Transverse colon (tissue), 4 donors: ENCODE measurements at regions of chr2 and their contacts with region 1.

Region 1: GRCh38 chr2:175366815-175367214 is 185.3 kb upstream of the ATP5MC3 start:
- DNase-seq: peak; percentile 10
- H3K4me3 ChIP-seq: no peak overlapping the region
- H3K27ac ChIP-seq: no peak overlapping the region
- H3K4me1 ChIP-seq: peaks cover 0 to 6% (median 0%) of the 10 kb centered on the region in 4 donors
- H3K27me3 ChIP-seq: peaks cover 40% of the 10 kb centered on the region
- CTCF ChIP-seq: peak; percentile 43 to 67 (median 61)
- EP300 ChIP-seq: no peak
- POLR2A ChIP-seq: no peak

Region 2: GRCh38 chr2:175432021-175432420 is 65.2 kb after region 1 on chr2:
- in situ Hi-C with region 1: no loop called
- intact Hi-C with region 1: no loop called
- DNase-seq: no peak
- H3K4me3 ChIP-seq: no peak overlapping the region
- H3K27ac ChIP-seq: no peak overlapping the region
- H3K4me1 ChIP-seq: no peaks in the 10 kb centered on the region
- H3K27me3 ChIP-seq: no peaks in the 10 kb centered on the region
- CTCF ChIP-seq: no peak
- EP300 ChIP-seq: no peak
- POLR2A ChIP-seq: no peak

Region 3: DNA sequence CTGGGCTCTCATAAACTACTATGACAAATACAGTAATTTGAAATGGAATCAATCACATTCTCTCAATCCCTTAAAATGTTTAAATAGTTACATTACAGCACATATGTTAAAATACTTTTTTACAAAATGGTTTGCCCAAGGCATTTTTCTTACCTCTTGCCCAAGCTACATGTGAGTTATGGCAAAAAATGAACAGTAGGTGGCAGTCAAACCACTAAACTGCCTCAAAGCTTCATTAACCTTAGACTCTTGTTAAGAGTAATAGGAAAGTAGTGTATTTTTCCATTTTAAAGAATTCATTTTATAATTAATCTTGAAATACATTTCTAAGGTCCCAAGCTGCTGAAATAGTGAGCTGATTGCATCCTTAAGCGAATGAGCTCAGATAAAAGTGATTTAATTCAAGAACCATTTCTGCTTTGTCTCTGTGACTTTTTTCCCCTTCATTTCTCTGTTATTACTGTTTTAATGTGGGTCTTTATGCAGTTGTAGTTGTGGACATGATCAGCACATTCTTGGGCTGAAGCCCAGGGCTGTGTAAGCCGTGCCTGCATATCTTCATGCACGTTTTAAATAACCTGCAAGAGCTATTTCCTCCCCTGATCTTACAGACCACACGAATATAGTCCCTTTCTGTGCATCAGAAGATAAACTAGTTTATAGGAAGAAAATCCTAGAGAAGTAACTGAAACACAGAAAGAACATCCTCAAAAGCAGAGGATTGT is 323.5 kb after region 1 on chr2:
- in situ Hi-C with region 1: loop called in 1 of 4 experiments (anchors 25 kb)
- intact Hi-C with region 1: no loop called
- DNase-seq: peak; percentile 24
- H3K4me3 ChIP-seq: no peak overlapping the region
- H3K27ac ChIP-seq: no peak overlapping the region
- H3K4me1 ChIP-seq: no peaks in the 10 kb centered on the region
- H3K27me3 ChIP-seq: peaks cover 47% of the 10 kb centered on the region
- CTCF ChIP-seq: peak; percentile 70 to 76 (median 72)
- EP300 ChIP-seq: no peak
- POLR2A ChIP-seq: no peak

Region 4: DNA sequence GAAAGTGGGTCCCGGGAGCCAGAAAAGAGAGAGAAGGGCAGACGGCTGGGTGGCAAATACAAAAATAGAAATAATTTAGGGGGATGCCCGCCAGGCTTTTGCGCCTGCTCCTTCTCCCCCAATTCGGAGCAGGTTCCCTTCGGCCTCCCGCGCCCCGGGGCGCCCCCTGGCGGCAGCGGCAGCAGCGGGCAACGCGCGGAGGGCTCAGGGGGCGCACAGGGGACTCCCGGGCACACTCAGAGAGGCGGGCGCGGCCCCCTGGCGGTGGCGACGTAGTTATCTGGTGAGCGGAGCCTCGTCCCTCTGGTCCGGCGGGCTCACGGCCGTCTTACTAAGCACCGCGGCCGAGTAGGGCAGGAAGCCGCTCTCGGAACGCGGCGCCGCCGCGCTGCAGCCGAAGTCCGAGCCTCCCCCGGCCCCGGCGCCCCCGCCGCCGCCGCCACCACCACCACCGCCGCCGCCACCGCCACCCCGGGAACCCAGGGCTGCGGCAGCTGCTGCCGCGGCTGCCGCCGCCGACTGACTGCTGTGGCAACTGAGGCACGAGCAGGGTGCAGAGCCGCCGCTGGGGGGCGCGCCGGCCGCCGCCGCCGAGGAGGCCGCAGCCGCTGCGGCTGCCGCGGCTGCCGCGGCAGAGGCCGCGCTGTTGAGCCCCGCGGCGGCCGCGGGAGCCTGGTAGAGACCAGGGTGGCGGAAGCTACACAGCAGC is 713.2 kb after region 1 on chr2:
- in situ Hi-C with region 1: loop called in 3 of 4 experiments (anchors 10 to 25 kb)
- intact Hi-C with region 1: no loop called
- DNase-seq: no peak
- H3K4me3 ChIP-seq: peak overlapping the region in 3 of 4 donors; percentile 13 to 48 (median 26)
- H3K27ac ChIP-seq: no peak overlapping the region
- H3K4me1 ChIP-seq: peaks cover 8 to 36% (median 26%) of the 10 kb centered on the region in 4 donors
- H3K27me3 ChIP-seq: peaks cover 99% of the 10 kb centered on the region
- CTCF ChIP-seq: peak; percentile 57 to 83 (median 69)
- EP300 ChIP-seq: no peak
- POLR2A ChIP-seq: no peak